Caco-2 (cell line): ENCODE measurements at regions of chr3 and their contacts with region 1.

Region 1: GRCh38 chr3:166713787-166714186 is 666.3 kb downstream of the ZBBX start:
- DNase-seq: no peak
- H3K4me3 ChIP-seq: no peak overlapping the region
- H3K4me3 Mint-ChIP-seq: no peak overlapping the region
- H3K27ac Mint-ChIP-seq: peak overlapping the region; percentile 42
- H3K4me1 ChIP-seq: no peaks in the 10 kb centered on the region
- H3K4me1 Mint-ChIP-seq: peaks cover 6% of the 10 kb centered on the region
- H3K27me3 ChIP-seq: no peaks in the 10 kb centered on the region
- H3K27me3 Mint-ChIP-seq: no peaks in the 10 kb centered on the region
- CTCF ChIP-seq: no peak

Region 2: GRCh38 chr3:166829896-166830575 is 116.2 kb after region 1 on chr3:
- CTCF ChIA-PET with region 1: no interaction called
- POLR2A ChIA-PET with region 1: no interaction called
- intact Hi-C with region 1: loop called (anchors 5 kb)
- DNase-seq: peak; percentile 41 to 57
- H3K4me3 ChIP-seq: no peak overlapping the region
- H3K4me3 Mint-ChIP-seq: no peak overlapping the region
- H3K27ac Mint-ChIP-seq: no peak overlapping the region
- H3K4me1 ChIP-seq: peaks cover 18% of the 10 kb centered on the region
- H3K4me1 Mint-ChIP-seq: no peaks in the 10 kb centered on the region
- H3K27me3 ChIP-seq: no peaks in the 10 kb centered on the region
- H3K27me3 Mint-ChIP-seq: no peaks in the 10 kb centered on the region
- CTCF ChIP-seq: no peak